SK-N-SH (cell line): ENCODE measurements at regions of chr7 and their contacts with region 1.

Region 1: GRCh38 chr7:139620676-139621344 is 97.3 kb downstream of the CLEC2L start:
- DNase-seq: peak; percentile 67
- H3K4me3 ChIP-seq: no peak overlapping the region
- H3K27ac ChIP-seq: no peak overlapping the region
- H3K4me1 ChIP-seq: no peaks in the 10 kb centered on the region
- H3K27me3 ChIP-seq: no peaks in the 10 kb centered on the region
- CTCF ChIP-seq: peak; percentile 76
- EP300 ChIP-seq: no peak
- RAD21 ChIP-seq: peak; percentile 79

Region 2: GRCh38 chr7:139588632-139589031 is 32.2 kb before region 1 on chr7:
- CTCF ChIA-PET with region 1: interaction called, 23 read pairs
- POLR2A ChIA-PET with region 1: no interaction called
- DNase-seq: no peak
- H3K4me3 ChIP-seq: no peak overlapping the region
- H3K27ac ChIP-seq: no peak overlapping the region
- H3K4me1 ChIP-seq: no peaks in the 10 kb centered on the region
- H3K27me3 ChIP-seq: no peaks in the 10 kb centered on the region
- CTCF ChIP-seq: no peak
- EP300 ChIP-seq: no peak
- RAD21 ChIP-seq: no peak

Region 3: DNA sequence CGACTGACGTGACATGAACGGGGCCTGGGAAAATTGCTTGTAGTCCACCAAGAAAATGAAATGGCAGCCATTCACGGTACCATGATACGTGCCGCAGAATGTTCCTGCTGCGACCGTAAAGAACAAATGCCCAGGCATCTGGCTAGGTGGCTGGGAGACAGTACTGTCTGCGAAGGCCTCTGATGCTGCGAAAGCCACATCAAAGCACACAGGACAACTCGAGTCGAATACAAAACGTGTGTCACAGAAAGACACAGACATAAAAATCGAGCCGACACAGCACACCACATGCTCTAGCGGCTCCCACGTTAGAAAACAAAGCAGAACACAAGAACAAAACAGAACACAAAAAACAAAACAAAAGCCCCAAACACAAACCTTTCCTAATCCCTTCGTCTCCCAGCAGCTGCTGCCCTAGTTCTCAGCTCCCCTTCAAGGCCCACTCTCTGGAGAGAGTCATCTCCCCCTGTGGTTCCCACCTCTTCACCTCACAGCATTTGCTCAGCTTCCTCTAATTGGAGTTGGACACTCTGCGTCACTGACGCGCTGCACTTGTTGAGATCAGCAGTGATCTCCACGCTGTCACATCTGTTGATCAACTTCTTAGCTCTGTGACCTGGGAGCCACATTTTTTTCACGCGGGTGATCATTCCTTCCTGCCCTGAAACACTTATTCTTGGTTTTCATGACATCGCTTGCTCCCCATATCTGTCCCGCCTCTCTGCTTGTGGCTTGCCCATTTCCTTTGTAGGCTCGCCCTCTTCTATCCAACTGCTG is 14.9 kb after region 1 on chr7:
- CTCF ChIA-PET with region 1: interaction called, 39 read pairs
- POLR2A ChIA-PET with region 1: no interaction called
- DNase-seq: no peak
- H3K4me3 ChIP-seq: no peak overlapping the region
- H3K27ac ChIP-seq: no peak overlapping the region
- H3K4me1 ChIP-seq: no peaks in the 10 kb centered on the region
- H3K27me3 ChIP-seq: no peaks in the 10 kb centered on the region
- CTCF ChIP-seq: no peak
- EP300 ChIP-seq: no peak
- RAD21 ChIP-seq: no peak

Region 4: DNA sequence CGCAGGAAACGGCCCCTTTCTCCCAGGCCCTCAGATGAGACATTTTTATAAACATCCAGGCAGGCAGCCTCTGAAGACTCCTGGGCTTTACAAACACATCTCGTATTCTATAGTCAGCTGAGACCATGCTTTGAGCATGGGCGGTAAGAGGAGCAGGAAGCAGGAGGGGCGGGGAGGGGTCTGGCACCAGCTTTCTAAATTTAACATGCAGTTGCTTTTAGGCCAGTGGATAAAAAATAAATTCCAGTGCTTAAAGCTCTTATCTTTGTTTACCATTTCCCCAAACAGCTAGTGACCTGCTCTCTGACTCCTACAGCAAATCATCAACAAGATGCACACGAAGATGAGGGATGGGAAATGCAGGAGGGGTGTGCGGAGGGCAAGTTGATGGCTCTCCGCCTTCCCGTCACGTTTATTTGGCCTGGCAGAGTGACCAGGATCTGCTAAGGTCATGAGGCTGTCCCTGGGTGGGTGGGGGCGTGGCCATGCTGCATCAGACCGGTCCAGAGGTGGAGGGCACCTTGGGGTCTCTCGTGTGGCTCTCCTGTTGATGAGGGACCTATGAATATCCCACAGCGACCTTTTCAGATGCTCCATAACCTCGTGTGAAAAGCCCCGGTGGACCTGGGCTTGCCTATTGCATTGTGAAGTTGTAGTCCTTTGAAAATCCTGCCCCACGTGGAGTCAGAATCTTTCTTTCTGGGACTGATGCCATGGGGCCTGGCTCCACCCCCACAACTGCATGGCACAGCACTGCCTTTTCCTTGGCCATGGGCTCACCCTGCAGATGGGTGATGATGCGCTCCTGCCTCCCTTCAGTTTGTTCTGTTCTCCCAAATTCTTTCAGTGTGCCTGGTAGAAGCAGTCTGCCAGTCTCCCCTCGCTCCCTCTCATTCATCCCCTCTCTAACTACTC is 374.5 kb after region 1 on chr7:
- CTCF ChIA-PET with region 1: interaction called, 46 read pairs
- POLR2A ChIA-PET with region 1: no interaction called
- DNase-seq: no peak
- H3K4me3 ChIP-seq: no peak overlapping the region
- H3K27ac ChIP-seq: no peak overlapping the region
- H3K4me1 ChIP-seq: peaks cover 0 to 9% of the 10 kb centered on the region in 2 experiments; a peak in 1 of 4 replicates
- H3K27me3 ChIP-seq: no peaks in the 10 kb centered on the region
- CTCF ChIP-seq: no peak
- EP300 ChIP-seq: no peak
- RAD21 ChIP-seq: no peak